BJ (cell line): ENCODE measurements at regions of chr14 and their contacts with region 1.

Region 1: GRCh38 chr14:93939304-93940229 is 12.4 kb downstream of the FAM181A start:
- DNase-seq: no peak
- H3K4me3 ChIP-seq: peak overlapping the region; percentile 23; the same call in 1 of the 2 replicates
- H3K27me3 ChIP-seq: peaks cover 10% of the 10 kb centered on the region
- CTCF ChIP-seq: peak; percentile 64

Region 2: GRCh38 chr14:93880021-93880820 is 59.3 kb before region 1 on chr14:
- CTCF ChIA-PET with region 1: no interaction called
- POLR2A ChIA-PET with region 1: no interaction called
- DNase-seq: no peak
- H3K4me3 ChIP-seq: no peak overlapping the region
- H3K27me3 ChIP-seq: no peaks in the 10 kb centered on the region
- CTCF ChIP-seq: no peak

Region 3: GRCh38 chr14:93926873-93927799 is 12.4 kb before region 1 on chr14 and contains the start of gene FAM181A:
- CTCF ChIA-PET with region 1: interaction called, 15 read pairs
- POLR2A ChIA-PET with region 1: no interaction called
- DNase-seq: no peak
- H3K4me3 ChIP-seq: no peak within 1 kb of the TSS
- H3K27me3 ChIP-seq: no peaks in the 10 kb centered on the region
- CTCF ChIP-seq: no peak
- polyA plus RNA-seq, gene FAM181A: not detected in 2 replicates

Region 4: DNA sequence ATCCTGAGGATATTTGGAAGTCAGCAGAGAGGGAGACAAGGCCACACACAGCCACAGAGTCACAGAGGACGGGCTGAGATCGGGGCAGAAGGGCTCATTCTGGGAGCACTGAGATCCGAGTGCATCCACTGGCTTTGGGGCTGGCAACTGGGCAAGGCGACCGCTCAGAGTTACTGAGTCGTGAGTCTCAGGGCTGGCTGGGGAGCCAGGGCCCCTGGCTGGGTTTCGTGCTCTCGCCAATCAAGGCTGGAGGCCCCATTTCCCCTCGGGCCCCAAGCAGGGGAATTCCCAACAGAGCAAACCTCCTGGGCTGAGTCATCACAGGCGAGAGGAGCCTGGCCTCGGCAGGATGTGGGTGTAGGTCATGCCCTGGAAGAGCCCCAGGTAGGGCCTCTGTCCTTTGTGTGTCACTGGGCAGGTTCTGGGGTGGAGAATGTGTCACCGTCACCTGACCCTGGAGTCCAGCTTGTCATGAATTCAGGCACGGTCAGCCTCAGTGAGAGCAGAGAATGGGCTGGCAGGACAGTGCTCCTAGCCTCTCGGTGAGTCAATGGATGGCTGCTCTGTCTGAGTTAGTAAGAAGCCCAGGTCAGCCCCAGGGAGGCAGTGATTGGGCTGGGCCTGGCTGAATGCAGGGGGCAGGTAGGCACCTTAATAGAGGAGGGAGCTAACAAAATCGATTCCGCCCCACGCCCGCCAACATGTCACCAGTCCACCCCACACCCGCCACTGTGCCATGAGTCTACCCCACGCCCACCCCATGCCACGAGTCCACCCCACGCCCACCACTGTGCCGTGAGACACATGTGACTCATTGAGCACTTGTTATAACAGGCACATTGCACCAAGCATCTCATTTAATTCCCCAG is 19.9 kb after region 1 on chr14:
- CTCF ChIA-PET with region 1: interaction called, 16 read pairs
- POLR2A ChIA-PET with region 1: no interaction called
- DNase-seq: peak; percentile 72
- H3K4me3 ChIP-seq: no peak overlapping the region
- H3K27me3 ChIP-seq: no peaks in the 10 kb centered on the region
- CTCF ChIP-seq: no peak

Region 5: DNA sequence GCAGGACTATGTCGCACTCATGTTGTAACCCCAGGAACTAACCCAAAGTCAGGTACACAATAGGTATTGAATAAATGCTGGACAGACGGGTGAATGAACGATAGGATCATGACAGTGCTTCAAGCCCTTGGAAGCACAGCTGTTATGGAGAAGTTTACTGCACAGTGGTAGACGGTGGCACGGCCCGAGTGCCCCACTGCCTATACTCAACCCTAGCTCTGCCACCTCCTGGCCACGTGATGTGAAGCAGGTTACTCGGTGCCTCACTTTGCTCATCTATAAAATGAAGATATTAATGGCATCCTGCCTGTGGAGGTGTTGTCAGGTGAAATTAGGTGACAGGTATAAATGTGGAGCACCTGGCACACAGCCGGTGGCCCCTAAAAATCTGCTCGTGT is 31.0 kb after region 1 on chr14:
- CTCF ChIA-PET with region 1: interaction called, 22 read pairs
- POLR2A ChIA-PET with region 1: no interaction called
- DNase-seq: no peak
- H3K4me3 ChIP-seq: no peak overlapping the region
- H3K27me3 ChIP-seq: peaks cover 3% of the 10 kb centered on the region; the same call in 1 of the 2 replicates
- CTCF ChIP-seq: peak; percentile 27; the same call in 1 of the 2 replicates

Region 6: DNA sequence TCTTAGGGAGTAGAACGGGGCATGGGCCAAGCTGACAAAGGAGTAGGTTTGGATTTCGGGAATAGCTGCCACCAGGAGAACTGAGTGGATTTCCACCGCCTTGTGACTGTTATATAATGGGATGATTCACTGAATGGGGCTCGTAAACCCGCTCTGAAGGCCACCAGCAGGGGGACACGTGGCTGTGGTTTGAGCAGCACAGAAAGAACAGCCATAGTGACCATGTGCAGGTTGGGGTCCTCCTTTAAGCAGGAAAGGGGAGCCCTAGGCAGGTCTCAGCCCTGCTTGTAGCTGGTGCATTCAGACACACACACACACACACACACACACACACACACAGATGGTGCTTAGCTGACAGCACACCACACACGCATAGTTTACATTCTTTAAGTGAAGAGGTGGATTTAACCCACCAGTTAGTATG is 45.4 kb after region 1 on chr14:
- CTCF ChIA-PET with region 1: interaction called, 10 read pairs
- POLR2A ChIA-PET with region 1: no interaction called
- DNase-seq: peak; percentile 62
- H3K4me3 ChIP-seq: no peak overlapping the region
- H3K27me3 ChIP-seq: no peaks in the 10 kb centered on the region
- CTCF ChIP-seq: peak; percentile 61

Region 7: DNA sequence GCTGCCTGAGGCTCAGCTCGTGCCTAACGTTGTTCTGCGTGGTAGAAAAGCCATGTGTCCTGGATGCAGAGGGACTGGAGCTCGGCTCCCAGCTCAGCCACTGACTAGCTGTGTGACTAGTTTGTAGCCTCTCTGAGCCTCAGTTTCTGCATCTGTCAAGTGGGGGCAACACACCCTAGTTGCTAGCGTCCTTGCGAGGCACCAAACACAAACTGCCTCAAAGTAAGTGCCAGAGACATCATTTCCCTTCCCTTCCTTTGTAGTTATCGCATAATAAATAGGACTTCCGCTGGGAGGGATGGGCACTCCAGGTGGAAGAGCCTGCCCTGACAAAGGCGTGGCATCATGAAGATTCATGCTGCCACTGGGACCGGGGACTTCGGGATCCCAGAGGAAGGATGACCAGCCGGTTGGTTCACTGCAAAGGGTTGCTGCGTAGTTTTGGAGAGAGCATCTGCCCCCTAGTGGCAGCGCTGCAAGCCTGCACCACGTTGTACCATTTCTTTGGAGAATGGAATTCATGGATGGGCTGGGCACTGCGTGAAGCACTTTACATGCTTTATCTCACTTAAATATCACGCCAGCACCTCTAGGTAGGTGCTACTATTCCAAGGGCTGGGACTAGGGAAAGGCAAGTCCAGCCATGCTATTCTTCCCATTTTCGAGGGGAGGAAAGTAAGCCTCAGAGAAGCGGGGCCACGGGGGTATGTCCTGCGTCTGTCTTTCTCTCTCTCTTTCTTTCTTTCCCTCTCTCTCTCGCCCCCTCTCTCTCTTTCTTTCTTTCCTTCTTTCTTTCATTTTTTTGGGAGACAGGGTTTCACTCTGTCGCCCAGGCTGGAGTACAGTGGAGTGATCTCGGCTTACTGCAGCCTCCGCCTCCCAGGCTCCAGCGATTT is 62.2 kb after region 1 on chr14:
- CTCF ChIA-PET with region 1: interaction called, 387 read pairs
- POLR2A ChIA-PET with region 1: no interaction called
- DNase-seq: no peak
- H3K4me3 ChIP-seq: no peak overlapping the region
- H3K27me3 ChIP-seq: peaks cover 5% of the 10 kb centered on the region
- CTCF ChIP-seq: peak; percentile 98

Region 8: DNA sequence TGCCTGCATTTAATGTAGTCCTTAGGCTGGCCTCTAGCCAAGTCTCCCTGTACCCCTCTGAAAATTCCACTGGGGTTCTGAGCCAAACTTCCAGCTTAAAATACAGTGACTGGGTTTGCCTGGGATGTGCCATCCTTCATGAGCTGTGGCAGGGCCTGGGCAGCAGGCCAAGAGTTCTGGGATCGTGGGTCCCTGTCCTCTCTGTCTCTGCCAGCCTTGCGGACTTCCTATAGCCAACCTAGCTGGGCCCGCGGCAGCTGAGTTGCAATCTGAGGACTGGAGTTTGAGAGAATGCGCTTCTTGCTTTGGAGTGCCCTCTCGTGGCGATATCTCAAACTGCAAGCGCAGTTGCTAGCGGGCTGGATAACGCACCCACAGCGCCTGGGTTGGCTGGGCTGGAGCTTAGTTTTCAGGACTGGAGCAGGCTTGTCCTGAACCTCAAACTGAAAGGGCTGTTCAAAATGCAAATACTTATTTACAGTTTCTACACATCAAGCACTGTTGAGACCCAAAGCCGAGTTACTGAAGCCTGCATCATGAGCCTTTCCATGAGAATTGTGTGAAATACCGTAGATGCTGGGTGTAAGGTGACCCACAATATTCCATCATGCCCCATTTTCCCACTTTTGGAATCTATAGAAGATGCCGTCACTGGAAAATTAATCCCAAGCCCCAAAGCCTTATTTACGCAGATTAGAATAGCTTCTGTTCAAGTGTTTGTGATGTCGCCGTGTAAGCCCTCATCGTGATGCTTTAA is 197.2 kb after region 1 on chr14:
- CTCF ChIA-PET with region 1: interaction called, 37 read pairs
- POLR2A ChIA-PET with region 1: no interaction called
- DNase-seq: peak; percentile 15
- H3K4me3 ChIP-seq: no peak overlapping the region
- H3K27me3 ChIP-seq: peaks cover 4% of the 10 kb centered on the region
- CTCF ChIP-seq: peak; percentile 98